ENCODE measurements at regions of chr7 and their contacts with region 1.

Region 1: DNA sequence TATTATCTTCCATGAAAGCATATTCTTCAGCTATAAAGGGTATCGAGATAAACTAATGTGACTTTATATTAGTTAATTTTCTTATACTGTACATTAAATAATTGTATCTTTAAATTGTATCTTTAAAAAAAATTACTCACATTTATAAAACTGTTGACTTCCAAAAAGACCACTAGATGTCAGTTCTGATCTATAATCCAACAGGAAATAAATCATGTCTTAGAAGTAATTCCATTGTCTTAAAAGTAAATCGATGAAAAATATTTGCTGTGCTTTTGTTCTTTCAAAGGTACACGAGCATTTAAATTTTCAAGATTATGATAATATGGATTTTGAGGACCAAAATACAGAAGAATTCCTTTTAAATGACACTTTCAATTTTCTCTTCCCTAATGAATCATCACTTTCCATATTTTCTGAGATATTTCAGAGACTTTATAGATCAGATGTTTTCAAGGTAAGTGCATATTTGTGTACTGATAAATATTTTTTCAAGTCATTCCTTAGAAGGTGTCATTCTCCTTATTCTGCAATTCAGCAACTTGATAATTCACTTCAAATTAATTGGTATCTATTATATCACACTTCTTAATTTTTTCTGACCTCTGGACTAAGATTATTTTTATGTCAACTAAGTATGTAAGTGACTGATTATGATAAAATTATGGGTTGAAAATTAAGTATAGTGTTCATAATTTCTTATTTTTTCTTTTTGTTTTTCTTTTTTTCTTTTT is 138.5 kb downstream of the CPED1 start:
- DNase-seq: no peak
- ATAC-seq: peak in 1 of 4 donors; percentile 39
- H3K4me3 ChIP-seq: no peak overlapping the region
- H3K27ac ChIP-seq: no peak overlapping the region
- H3K4me1 ChIP-seq: no peaks in the 10 kb centered on the region
- H3K27me3 ChIP-seq: no peaks in the 10 kb centered on the region
- CTCF ChIP-seq: peak in 2 of 4 donors; percentile 10 to 14

Region 2: GRCh38 chr7:119232091-119232490 is 1894.9 kb before region 1 on chr7:
- intact Hi-C with region 1: no loop called
- DNase-seq: no peak
- ATAC-seq: no peak
- H3K4me3 ChIP-seq: no peak overlapping the region
- H3K27ac ChIP-seq: no peak overlapping the region
- H3K4me1 ChIP-seq: no peaks in the 10 kb centered on the region
- H3K27me3 ChIP-seq: no peaks in the 10 kb centered on the region
- CTCF ChIP-seq: no peak

Region 3: GRCh38 chr7:120852700-120853099 is 274.3 kb before region 1 on chr7:
- intact Hi-C with region 1: no loop called
- DNase-seq: no peak
- ATAC-seq: no peak
- H3K4me3 ChIP-seq: no peak overlapping the region
- H3K27ac ChIP-seq: no peak overlapping the region
- H3K4me1 ChIP-seq: peaks cover 0 to 7% (median 0%) of the 10 kb centered on the region in 3 donors
- H3K27me3 ChIP-seq: no peaks in the 10 kb centered on the region
- CTCF ChIP-seq: no peak

Region 4: GRCh38 chr7:121547544-121548092 is 420.6 kb after region 1 on chr7:
- intact Hi-C with region 1: loop called in 1 of 3 experiments (anchors 10 kb)
- DNase-seq: no peak
- ATAC-seq: peak; percentile 90 to 96 (median 95)
- H3K4me3 ChIP-seq: no peak overlapping the region
- H3K27ac ChIP-seq: no peak overlapping the region
- H3K4me1 ChIP-seq: peaks cover 3 to 22% (median 6%) of the 10 kb centered on the region in 3 donors
- H3K27me3 ChIP-seq: no peaks in the 10 kb centered on the region
- CTCF ChIP-seq: peak; percentile 38 to 76 (median 54)

Measured in pancreas (tissue), 10 donors.